GM12878 (cell line): ENCODE measurements at regions of chr5 and their contacts with region 1.

Region 1: DNA sequence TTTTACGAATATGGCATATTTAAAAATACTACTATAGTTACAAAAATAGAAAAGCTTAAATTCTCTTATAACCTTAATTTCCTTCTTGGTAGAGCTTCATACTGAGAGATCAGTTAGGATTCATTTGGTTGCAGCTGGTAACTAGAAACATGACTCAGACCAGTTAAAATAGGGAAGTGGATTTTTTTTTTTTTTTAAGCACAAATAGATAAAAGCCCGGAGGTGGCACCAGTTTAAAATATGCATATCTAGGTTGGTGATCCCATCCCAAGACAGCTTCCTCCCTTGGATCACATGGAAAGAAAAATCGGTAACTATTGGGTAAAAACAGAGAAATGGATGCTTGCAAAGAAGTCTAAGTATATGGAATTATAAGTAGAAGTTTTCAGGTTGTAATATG is 1634.3 kb downstream of the MAT2B start:
- DNase-seq: no peak
- ATAC-seq: peak; percentile 83
- H3K4me3 ChIP-seq: no peak overlapping the region
- H3K27ac ChIP-seq: no peak overlapping the region
- H3K4me1 ChIP-seq: no peaks in the 10 kb centered on the region
- H3K27me3 ChIP-seq: no peaks in the 10 kb centered on the region
- CTCF ChIP-seq: no peak
- EP300 ChIP-seq: no peak
- POLR2A ChIP-seq: no peak
- RAD21 ChIP-seq: no peak

Region 2: GRCh38 chr5:164860896-164861295 is 278.8 kb before region 1 on chr5:
- CTCF ChIA-PET with region 1: no interaction called
- POLR2A ChIA-PET with region 1: no interaction called
- RAD21 ChIA-PET with region 1: no interaction called
- SMC1A ChIA-PET with region 1: no interaction called
- in situ Hi-C with region 1: no loop called
- intact Hi-C with region 1: no loop called
- DNase-seq: no peak
- ATAC-seq: no peak
- H3K4me3 ChIP-seq: no peak overlapping the region
- H3K27ac ChIP-seq: no peak overlapping the region
- H3K4me1 ChIP-seq: no peaks in the 10 kb centered on the region
- H3K27me3 ChIP-seq: no peaks in the 10 kb centered on the region
- CTCF ChIP-seq: no peak
- EP300 ChIP-seq: no peak
- POLR2A ChIP-seq: no peak
- RAD21 ChIP-seq: no peak

Region 3: DNA sequence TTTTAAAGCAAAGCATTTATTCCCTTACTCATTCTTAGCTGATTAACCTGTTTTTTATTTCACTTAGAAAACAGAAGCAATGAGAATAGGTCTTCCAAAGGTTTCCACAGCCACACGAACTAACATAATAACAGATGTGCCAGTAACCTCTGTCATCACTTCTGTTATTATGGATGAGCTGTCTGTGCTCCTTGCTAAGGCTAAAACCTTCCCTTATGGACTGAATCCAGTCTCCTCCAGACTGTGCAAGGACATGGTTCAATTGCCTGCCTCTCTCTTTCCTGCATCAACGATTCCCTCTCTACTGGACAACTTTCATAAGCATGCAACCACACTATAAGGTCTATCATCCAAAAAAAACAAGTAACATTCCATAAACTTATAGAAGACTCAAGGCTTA is 188.2 kb before region 1 on chr5:
- CTCF ChIA-PET with region 1: no interaction called
- POLR2A ChIA-PET with region 1: no interaction called
- RAD21 ChIA-PET with region 1: no interaction called
- SMC1A ChIA-PET with region 1: no interaction called
- in situ Hi-C with region 1: no loop called
- intact Hi-C with region 1: no loop called
- DNase-seq: no peak
- ATAC-seq: no peak
- H3K4me3 ChIP-seq: no peak overlapping the region
- H3K27ac ChIP-seq: no peak overlapping the region
- H3K4me1 ChIP-seq: no peaks in the 10 kb centered on the region
- H3K27me3 ChIP-seq: no peaks in the 10 kb centered on the region
- CTCF ChIP-seq: no peak
- EP300 ChIP-seq: no peak
- POLR2A ChIP-seq: no peak
- RAD21 ChIP-seq: no peak

Region 4: DNA sequence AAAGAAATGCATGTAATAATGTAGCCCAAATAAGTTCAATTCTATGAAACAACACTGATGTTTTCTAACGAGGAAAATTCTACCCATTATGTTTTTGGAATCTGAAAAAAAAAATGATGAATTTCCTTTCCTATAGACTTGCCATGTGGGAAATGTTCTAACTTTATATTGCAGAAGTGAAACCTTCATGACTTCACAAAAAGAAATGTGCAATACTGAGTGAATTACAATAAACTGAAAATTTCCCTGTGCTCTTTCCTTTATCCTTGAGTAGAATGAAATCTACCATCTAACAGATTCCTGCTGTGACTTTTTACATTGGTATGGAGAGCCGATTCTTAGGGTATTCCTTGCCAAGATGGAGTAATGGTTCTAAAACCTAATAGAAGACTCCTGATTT is 11.8 kb before region 1 on chr5:
- CTCF ChIA-PET with region 1: interaction called, 7 read pairs
- POLR2A ChIA-PET with region 1: interaction called, 6 read pairs
- RAD21 ChIA-PET with region 1: interaction called, 9 read pairs
- SMC1A ChIA-PET with region 1: interaction called, 40 read pairs
- in situ Hi-C with region 1: no loop called
- intact Hi-C with region 1: no loop called
- DNase-seq: no peak
- ATAC-seq: no peak
- H3K4me3 ChIP-seq: no peak overlapping the region
- H3K27ac ChIP-seq: no peak overlapping the region
- H3K4me1 ChIP-seq: no peaks in the 10 kb centered on the region
- H3K27me3 ChIP-seq: no peaks in the 10 kb centered on the region
- CTCF ChIP-seq: no peak
- EP300 ChIP-seq: no peak
- POLR2A ChIP-seq: no peak
- RAD21 ChIP-seq: no peak

Region 5: DNA sequence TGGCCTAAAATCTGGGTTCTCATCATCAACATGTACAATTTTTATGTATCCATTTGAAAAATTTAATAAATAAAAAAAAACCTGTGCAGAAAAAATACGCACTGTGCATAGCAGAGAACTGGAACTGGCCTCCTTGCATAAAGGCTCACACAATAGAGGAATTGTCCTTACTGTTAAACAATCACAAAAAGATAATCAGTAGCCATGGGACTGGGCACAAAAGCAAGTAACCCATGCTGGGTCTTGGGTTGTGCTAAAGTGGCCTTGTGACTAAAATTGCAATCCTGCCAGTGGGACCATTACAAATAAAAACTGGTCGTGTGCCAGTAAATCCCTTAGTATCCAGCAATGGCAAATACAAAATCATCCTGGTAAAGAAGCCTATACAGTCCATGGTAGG is 12.3 kb after region 1 on chr5:
- CTCF ChIA-PET with region 1: interaction called, 6 read pairs
- POLR2A ChIA-PET with region 1: no interaction called
- RAD21 ChIA-PET with region 1: interaction called, 5 read pairs
- SMC1A ChIA-PET with region 1: interaction called, 33 read pairs
- in situ Hi-C with region 1: no loop called
- intact Hi-C with region 1: no loop called
- DNase-seq: no peak
- ATAC-seq: no peak
- H3K4me3 ChIP-seq: no peak overlapping the region
- H3K27ac ChIP-seq: no peak overlapping the region
- H3K4me1 ChIP-seq: no peaks in the 10 kb centered on the region
- H3K27me3 ChIP-seq: no peaks in the 10 kb centered on the region
- CTCF ChIP-seq: no peak
- EP300 ChIP-seq: no peak
- POLR2A ChIP-seq: no peak
- RAD21 ChIP-seq: no peak